Activated CD4-positive, alpha-beta T cell treated with anti-CD3 and anti-CD28 coated beads, Interleukin-2, amount 10 ng/mL, durations not matched to agents 24 days and 14 days (primary cell): ENCODE measurements at regions of chr7 and their contacts with region 1.

Region 1: GRCh38 chr7:138002096-138002827 is 376 bp upstream of the CREB3L2 start:
- DNase-seq: peak; percentile 100
- H3K4me3 Mint-ChIP-seq: peak overlapping the region; percentile 87
- H3K27ac Mint-ChIP-seq: peak overlapping the region; percentile 94
- H3K4me1 Mint-ChIP-seq: peaks cover 29% of the 10 kb centered on the region
- H3K27me3 Mint-ChIP-seq: no peaks in the 10 kb centered on the region

Region 2: GRCh38 chr7:136667584-136667983 is 1334.7 kb before region 1 on chr7:
- intact Hi-C with region 1: no loop called
- DNase-seq: no peak
- H3K4me3 Mint-ChIP-seq: no peak overlapping the region
- H3K27ac Mint-ChIP-seq: no peak overlapping the region
- H3K4me1 Mint-ChIP-seq: no peaks in the 10 kb centered on the region
- H3K27me3 Mint-ChIP-seq: no peaks in the 10 kb centered on the region

Region 3: DNA sequence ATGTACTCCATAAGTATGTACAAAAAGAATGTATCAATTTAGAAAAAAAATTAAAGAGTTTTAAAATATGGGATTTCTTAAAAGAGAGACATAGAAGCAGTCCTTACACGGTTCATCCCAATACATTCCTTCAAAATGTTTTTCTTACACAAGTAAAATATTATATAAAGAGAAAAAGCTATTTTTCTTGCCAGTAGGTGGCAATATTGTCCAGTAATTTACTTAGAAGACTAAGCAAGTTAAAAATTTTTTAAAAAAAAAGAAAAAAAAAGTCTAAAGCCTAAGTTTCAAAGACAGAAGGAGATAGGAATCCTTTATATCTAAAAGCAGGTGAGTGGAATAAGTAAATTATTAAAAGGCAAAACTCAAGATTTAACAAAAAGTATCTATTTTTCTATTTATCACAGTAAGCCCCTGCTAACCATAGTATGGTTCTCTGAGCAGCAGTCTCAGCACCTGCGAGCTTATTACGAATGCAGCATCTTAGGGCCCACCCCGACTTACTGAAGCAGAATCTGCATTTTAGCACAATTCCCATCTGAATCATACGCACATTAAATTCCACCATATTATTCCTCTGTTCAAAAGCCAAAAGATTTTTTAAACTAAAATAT is 396.1 kb before region 1 on chr7:
- intact Hi-C with region 1: loop called (anchors 5 kb)
- DNase-seq: no peak
- H3K4me3 Mint-ChIP-seq: no peak overlapping the region
- H3K27ac Mint-ChIP-seq: no peak overlapping the region
- H3K4me1 Mint-ChIP-seq: no peaks in the 10 kb centered on the region
- H3K27me3 Mint-ChIP-seq: no peaks in the 10 kb centered on the region

Region 4: DNA sequence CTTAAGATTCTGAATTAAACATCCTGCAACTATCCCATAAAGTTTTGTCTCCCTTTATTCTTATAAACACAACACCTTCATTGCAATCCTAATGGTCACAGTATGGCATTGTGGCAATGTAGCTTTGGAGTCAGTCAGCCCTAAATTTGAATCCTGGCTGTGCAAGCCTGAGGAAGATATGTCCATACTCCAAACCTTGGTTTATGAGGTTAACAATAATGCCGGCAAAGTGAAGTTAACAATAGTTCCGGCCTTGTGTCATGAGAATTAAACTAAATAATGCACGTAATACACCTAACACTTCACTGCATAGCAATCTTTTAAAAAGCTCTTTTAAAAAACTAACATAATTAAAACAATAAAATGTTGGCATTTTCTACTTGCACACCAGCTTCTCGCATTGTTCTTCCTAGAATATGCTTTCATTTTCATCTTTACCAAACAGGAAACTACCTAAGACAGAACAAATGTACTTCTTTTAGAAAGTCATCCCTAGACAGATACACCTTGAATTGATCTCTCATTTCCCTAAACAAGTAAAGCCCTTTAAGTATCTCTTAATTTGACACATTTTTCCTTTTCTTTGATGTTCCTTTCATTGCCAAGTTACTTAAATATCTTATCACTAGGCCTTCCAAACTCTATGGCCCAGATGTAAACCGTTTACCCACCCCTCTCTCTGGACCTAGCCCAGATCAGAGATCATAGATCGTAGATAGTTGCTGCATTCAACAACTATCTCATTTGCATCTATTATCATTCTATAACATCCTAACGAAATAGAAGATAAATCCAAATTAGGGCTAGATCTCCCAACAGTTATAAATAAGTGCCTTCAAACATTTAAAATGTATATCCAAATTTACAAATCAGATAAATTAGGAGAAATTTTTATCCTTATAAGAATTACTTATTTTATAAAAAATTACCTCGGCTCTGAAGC is 67.0 kb before region 1 on chr7:
- intact Hi-C with region 1: loop called (anchors 2 kb)
- DNase-seq: no peak
- H3K4me3 Mint-ChIP-seq: peak overlapping the region; percentile 89
- H3K27ac Mint-ChIP-seq: peak overlapping the region; percentile 93
- H3K4me1 Mint-ChIP-seq: peaks cover 42% of the 10 kb centered on the region
- H3K27me3 Mint-ChIP-seq: no peaks in the 10 kb centered on the region

Region 5: GRCh38 chr7:137948469-137949330 is 53.6 kb before region 1 on chr7:
- intact Hi-C with region 1: no loop called
- DNase-seq: no peak
- H3K4me3 Mint-ChIP-seq: no peak overlapping the region
- H3K27ac Mint-ChIP-seq: no peak overlapping the region
- H3K4me1 Mint-ChIP-seq: peaks cover 15% of the 10 kb centered on the region
- H3K27me3 Mint-ChIP-seq: no peaks in the 10 kb centered on the region

Region 6: DNA sequence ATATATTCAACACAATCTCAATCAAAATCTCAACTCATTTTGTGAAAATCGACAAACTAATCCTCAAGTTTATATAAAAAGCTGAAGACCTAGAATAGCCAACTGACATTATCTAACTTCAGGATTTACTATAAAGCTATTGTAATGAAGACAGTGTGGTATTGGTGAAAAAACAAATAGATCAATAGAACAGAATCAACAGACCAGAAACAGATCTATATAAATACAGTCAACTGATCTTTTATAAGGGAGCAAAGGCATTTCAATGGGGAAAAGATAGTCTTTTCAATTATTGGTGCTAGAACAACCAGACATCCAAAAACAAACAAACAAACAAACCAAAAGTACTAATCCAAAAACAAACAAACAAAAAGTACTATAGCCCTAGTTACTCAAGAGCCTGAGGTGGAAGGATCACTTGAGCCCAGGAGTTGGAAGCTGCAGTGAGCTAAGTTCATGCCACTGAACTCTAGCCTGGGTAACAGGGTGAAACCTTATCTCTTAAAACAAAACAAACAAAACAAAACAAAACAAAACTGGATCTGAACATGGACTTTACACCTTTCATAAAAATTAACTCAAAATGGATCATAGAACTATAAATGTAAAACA is 47.3 kb after region 1 on chr7:
- intact Hi-C with region 1: no loop called
- DNase-seq: no peak
- H3K4me3 Mint-ChIP-seq: no peak overlapping the region
- H3K27ac Mint-ChIP-seq: no peak overlapping the region
- H3K4me1 Mint-ChIP-seq: no peaks in the 10 kb centered on the region
- H3K27me3 Mint-ChIP-seq: peaks cover 7% of the 10 kb centered on the region

Region 7: DNA sequence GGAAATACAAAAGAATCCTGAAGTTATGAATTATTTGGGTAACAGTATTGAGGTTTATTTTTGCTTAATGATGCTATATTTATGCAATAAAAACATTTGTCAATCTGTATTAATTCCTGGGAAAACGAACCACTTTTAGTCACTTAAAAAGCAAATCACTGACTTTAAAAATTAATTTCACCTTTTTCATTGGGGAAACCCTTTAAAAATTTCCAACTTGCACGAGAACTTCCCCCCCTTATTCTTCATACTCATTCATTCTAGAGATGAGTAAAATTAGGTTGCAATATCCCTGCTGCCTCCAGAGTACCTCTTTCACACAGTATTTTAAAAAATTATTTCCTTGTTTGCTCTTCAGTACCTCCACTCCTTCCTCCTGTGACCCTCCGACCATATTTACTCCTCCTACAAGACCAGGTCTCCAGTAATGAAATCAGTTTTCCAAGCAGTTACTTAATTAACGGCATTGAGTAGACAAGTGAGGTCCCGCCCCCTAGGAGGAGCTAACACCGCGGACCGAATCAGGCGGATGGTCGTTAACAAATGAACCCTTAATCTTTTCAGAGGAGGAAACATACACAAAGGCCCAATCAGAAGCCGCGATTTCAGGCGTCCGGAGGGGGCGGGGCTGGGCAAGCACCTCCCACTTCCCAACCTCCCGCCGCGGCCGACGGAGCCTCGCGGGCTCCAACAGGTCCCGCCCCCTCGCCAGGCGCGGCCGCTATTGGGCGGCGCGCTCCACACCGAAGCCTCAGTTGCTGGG is 457.3 kb after region 1 on chr7:
- intact Hi-C with region 1: loop called (anchors 1 kb)
- DNase-seq: peak; percentile 99
- H3K4me3 Mint-ChIP-seq: peak overlapping the region; percentile 78
- H3K27ac Mint-ChIP-seq: peak overlapping the region; percentile 47
- H3K4me1 Mint-ChIP-seq: peaks cover 17% of the 10 kb centered on the region
- H3K27me3 Mint-ChIP-seq: peaks cover 2% of the 10 kb centered on the region

Region 8: GRCh38 chr7:138500892-138501291 is 498.6 kb after region 1 on chr7:
- intact Hi-C with region 1: no loop called
- DNase-seq: no peak
- H3K4me3 Mint-ChIP-seq: no peak overlapping the region
- H3K27ac Mint-ChIP-seq: no peak overlapping the region
- H3K4me1 Mint-ChIP-seq: peaks cover 6% of the 10 kb centered on the region
- H3K27me3 Mint-ChIP-seq: no peaks in the 10 kb centered on the region

Region 9: DNA sequence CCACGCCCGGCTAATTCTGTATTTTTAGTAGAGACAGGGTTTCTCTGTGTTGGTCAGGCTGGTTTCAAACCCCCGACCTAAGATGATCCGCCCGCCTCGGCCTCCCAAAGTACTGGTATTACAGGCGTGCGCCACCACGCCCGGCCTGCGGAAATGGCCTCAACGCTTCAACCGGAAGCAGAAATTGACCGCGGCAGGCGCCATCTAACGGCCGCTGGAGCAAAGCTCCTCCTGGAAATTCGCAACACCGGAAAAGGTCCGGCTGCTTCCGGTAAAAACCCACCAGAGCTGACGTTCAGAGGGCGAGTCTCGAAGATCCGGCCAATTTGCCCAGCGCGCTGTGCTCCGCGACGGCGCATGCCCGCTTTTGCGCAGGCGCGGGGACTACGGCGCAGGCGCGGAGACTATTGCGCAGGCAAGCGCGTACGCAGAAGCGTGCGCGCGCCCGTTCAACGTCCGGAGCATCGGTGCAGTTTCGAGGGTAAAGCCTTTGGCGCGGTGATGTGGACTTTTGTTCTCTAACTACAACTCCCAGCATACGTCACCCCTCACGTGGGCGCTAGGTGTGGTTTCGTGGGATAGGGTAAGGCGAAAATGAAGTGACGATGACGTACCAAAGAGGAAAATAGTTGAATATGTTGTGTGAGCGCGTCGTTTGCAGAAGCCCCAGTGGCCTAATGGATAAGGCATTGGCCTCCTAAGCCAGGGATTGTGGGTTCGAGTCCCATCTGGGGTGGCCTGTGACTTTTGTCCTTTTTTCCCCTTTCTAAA is 1338.0 kb after region 1 on chr7:
- intact Hi-C with region 1: loop called (anchors 5 kb)
- DNase-seq: peak; percentile 99
- H3K4me3 Mint-ChIP-seq: peak overlapping the region; percentile 91
- H3K27ac Mint-ChIP-seq: peak overlapping the region; percentile 93
- H3K4me1 Mint-ChIP-seq: peaks cover 19% of the 10 kb centered on the region
- H3K27me3 Mint-ChIP-seq: peaks cover 4% of the 10 kb centered on the region